Colonic mucosa (tissue), 4 donors: ENCODE measurements at regions of chr5 and their contacts with region 1.

Region 1: GRCh38 chr5:159928122-159928909 is 12.0 kb downstream of the ADRA1B start:
- DNase-seq: no peak
- H3K4me3 ChIP-seq: no peak overlapping the region
- H3K27ac ChIP-seq: no peak overlapping the region
- H3K4me1 ChIP-seq: no peaks in the 10 kb centered on the region
- H3K27me3 ChIP-seq: no peaks in the 10 kb centered on the region
- CTCF ChIP-seq: no peak

Region 2: GRCh38 chr5:159515909-159516415 is 412.4 kb before region 1 on chr5:
- intact Hi-C with region 1: loop called (anchors 10 kb)
- DNase-seq: peak; percentile 57
- H3K4me3 ChIP-seq: no peak overlapping the region
- H3K27ac ChIP-seq: no peak overlapping the region
- H3K4me1 ChIP-seq: no peaks in the 10 kb centered on the region
- H3K27me3 ChIP-seq: no peaks in the 10 kb centered on the region
- CTCF ChIP-seq: peak; percentile 86